Activated CD8-positive, alpha-beta T cell treated with anti-CD3 and anti-CD28 coated beads for 36 hours (primary cell): ENCODE measurements at regions of chr11 and their contacts with region 1.

Region 1: DNA sequence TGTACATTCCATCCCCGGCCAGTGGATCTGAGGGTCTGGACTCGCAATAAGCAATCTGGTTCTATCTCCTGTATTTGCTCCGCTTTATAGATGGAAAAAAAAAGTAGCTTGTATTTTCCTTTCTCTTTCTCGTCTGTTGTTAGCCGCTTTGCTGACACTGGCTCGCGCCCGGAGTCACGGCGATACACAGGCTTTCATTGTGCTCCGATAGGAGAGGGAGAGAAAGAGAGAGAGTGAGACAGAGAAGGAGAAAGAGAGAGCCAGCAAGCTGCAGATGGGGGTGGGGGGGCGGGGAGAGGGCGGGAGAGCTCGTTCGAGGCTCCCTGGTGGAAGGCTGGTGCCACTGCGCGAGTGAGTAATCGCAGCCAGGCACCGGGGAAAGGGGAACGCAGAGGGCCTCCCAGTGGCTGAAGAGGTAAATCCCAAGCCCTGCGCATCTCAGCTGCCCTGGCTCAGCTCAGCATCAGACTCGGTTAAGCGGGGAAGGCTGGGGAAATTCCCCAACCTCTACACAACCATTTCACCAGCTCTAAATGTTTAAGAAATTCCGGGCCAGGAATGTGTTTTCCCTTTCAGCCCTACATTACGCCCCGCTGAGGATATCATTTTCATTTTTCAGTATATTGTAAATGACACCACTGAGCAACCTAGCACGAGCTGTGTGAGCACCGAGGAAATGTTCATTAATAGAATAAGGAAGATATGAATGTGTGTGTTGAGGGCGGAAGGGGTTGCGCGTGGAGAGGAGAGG is at the start of gene MAML2:
- DNase-seq: peak; percentile 96
- ATAC-seq: peak; percentile 84
- H3K4me3 Mint-ChIP-seq: peak within 1 kb of the TSS; percentile 86
- H3K27ac Mint-ChIP-seq: peak within 1 kb of the TSS; percentile 94
- H3K4me1 Mint-ChIP-seq: peaks cover 23% of the 10 kb centered on the region
- H3K27me3 Mint-ChIP-seq: no peaks in the 10 kb centered on the region
- CTCF ChIP-seq: peak; percentile 85
- total RNA-seq, gene MAML2: 11.8 to 12.5 TPM

Region 2: DNA sequence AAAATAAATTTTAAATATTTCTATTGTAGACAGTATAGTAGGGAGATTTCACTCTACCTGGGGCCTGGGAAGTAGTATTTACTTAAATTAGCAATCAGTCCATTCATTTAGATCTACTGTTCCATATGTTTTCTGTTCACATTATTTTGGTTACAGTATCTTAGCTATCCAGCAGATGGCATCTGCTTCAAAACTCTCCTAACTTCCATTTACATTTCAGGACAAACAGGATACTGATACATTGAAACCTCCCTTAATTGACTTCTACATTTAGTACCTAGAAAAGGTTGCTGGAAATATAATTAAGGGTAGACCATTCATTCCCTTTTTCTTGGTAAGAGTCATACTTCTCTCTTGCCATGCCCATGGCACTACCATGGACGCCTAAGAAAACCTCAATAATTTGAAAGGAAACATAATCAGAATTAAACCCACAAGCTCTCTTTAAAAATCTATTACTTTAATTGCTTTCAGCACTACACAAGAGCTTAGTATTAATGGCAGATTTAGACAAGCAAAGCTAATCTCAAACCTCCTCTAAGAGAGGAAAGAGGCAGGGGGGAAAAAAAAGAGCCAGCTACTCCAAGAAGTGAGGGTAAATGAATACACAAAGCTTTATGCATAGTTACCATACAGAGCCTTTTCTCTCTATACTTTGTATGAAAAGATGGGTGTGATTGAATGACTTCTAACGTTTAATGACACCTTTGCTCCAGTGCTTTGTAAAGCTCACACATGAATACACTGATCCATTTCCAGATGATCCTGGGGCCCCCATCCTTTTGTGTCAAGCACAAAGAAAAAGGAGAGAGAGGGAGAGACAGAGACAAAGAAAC is 288.0 kb before region 1 on chr11:
- CTCF ChIA-PET with region 1: interaction called, 45 read pairs
- POLR2A ChIA-PET with region 1: no interaction called
- intact Hi-C with region 1: loop called (anchors 5 kb)
- DNase-seq: no peak
- ATAC-seq: peak; percentile 34
- H3K4me3 Mint-ChIP-seq: no peak overlapping the region
- H3K27ac Mint-ChIP-seq: peak overlapping the region; percentile 73
- H3K4me1 Mint-ChIP-seq: peaks cover 75% of the 10 kb centered on the region
- H3K27me3 Mint-ChIP-seq: no peaks in the 10 kb centered on the region
- CTCF ChIP-seq: peak; percentile 78

Region 3: DNA sequence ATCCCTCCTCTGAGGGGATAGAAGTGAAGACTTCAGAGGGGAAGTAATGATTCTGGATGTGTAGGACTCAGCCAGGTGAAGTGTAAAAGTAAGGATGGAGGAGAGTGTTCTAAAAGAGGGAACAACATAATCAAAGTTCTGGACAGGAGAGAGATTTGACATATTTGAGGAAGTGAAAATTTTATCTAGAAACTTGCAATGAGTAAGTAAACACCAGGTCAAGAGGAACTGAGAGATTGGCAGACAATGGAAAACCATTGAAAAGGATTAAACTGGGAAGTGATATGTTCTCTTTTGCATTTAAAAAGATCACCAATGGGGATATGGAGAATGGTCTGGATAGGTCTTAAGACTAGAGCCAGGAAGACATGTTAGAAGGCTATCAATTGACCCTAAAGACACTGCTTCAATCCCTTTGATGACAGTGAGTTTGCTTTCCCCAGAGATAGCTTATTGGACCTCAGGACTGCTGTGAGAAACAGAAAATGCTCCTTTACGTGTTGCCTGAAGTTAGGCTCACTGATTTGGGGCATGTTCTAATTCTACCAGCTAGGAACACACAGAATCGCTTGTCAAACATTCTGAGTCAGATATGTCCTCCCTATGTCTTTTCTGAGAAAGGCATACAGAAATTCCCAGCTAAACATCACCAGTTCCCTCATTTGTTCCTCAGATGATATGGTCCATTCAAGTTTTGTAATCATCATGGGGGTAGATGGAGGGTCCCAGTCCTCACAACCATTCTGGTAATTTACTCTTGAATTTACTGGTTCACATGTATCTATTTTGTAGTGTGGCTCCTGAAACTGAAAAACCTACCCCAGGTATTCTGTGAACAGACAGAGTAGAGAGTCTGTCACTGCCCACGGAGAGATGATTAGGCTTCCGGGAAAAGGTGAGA is 145.1 kb before region 1 on chr11:
- CTCF ChIA-PET with region 1: interaction called, 11 read pairs
- POLR2A ChIA-PET with region 1: interaction called, 3 read pairs
- intact Hi-C with region 1: no loop called
- DNase-seq: no peak
- ATAC-seq: peak; percentile 18
- H3K4me3 Mint-ChIP-seq: no peak overlapping the region
- H3K27ac Mint-ChIP-seq: peak overlapping the region; percentile 74
- H3K4me1 Mint-ChIP-seq: peaks cover 87% of the 10 kb centered on the region
- H3K27me3 Mint-ChIP-seq: no peaks in the 10 kb centered on the region
- CTCF ChIP-seq: no peak

Region 4: GRCh38 chr11:96242971-96243647 is 100.0 kb before region 1 on chr11:
- CTCF ChIA-PET with region 1: interaction called, 132 read pairs
- POLR2A ChIA-PET with region 1: interaction called, 12 read pairs
- intact Hi-C with region 1: no loop called
- DNase-seq: peak; percentile 91
- ATAC-seq: peak; percentile 78
- H3K4me3 Mint-ChIP-seq: peak overlapping the region; percentile 74
- H3K27ac Mint-ChIP-seq: peak overlapping the region; percentile 89
- H3K4me1 Mint-ChIP-seq: peaks cover 49% of the 10 kb centered on the region
- H3K27me3 Mint-ChIP-seq: no peaks in the 10 kb centered on the region
- CTCF ChIP-seq: no peak

Region 5: GRCh38 chr11:96287822-96288439 is 55.2 kb before region 1 on chr11:
- CTCF ChIA-PET with region 1: interaction called, 43 read pairs
- POLR2A ChIA-PET with region 1: interaction called, 11 read pairs
- intact Hi-C with region 1: loop called (anchors 2 kb)
- DNase-seq: no peak
- ATAC-seq: no peak
- H3K4me3 Mint-ChIP-seq: peak overlapping the region; percentile 16
- H3K27ac Mint-ChIP-seq: peak overlapping the region; percentile 73
- H3K4me1 Mint-ChIP-seq: peaks cover 89% of the 10 kb centered on the region
- H3K27me3 Mint-ChIP-seq: no peaks in the 10 kb centered on the region
- CTCF ChIP-seq: no peak

Region 6: DNA sequence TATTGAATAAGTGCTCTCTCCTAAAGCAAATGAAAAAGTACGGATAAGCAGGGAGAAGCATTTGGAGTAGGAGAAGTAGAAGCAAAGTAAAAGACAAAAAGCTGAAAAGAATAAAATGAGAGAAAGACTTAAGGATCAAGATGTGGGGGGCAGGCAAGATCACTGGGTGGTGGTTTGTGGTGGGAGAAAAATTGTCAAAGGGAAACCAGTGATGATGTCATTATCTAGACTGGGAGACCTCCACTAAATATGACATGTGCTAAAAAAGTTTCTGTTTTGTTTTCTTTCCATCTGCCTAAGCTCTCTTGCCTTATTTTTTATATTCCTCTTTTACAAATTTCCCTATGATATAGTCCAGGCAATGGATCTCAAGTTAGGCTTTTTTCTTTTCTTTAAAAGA is 14.7 kb after region 1 on chr11:
- CTCF ChIA-PET with region 1: interaction called, 27 read pairs
- POLR2A ChIA-PET with region 1: interaction called, 10 read pairs
- intact Hi-C with region 1: no loop called
- DNase-seq: peak; percentile 59
- ATAC-seq: peak; percentile 92
- H3K4me3 Mint-ChIP-seq: peak overlapping the region; percentile 9
- H3K27ac Mint-ChIP-seq: peak overlapping the region; percentile 73
- H3K4me1 Mint-ChIP-seq: peaks cover 34% of the 10 kb centered on the region
- H3K27me3 Mint-ChIP-seq: no peaks in the 10 kb centered on the region
- CTCF ChIP-seq: no peak

Region 7: GRCh38 chr11:96430668-96431067 is 87.5 kb after region 1 on chr11:
- CTCF ChIA-PET with region 1: no interaction called
- POLR2A ChIA-PET with region 1: no interaction called
- intact Hi-C with region 1: no loop called
- DNase-seq: no peak
- ATAC-seq: no peak
- H3K4me3 Mint-ChIP-seq: no peak overlapping the region
- H3K27ac Mint-ChIP-seq: no peak overlapping the region
- H3K4me1 Mint-ChIP-seq: no peaks in the 10 kb centered on the region
- H3K27me3 Mint-ChIP-seq: peaks cover 34% of the 10 kb centered on the region
- CTCF ChIP-seq: no peak